MCF 10A (cell line): ENCODE measurements at regions of chr11 and their contacts with region 1.

Region 1: GRCh38 chr11:43396617-43397016 is 37.9 kb downstream of the TTC17 start:
- DNase-seq: no peak
- H3K4me3 Mint-ChIP-seq: no peak overlapping the region
- H3K27ac Mint-ChIP-seq: no peak overlapping the region
- H3K4me1 Mint-ChIP-seq: no peaks in the 10 kb centered on the region
- H3K27me3 Mint-ChIP-seq: no peaks in the 10 kb centered on the region
- CTCF ChIP-seq: no peak

Region 2: GRCh38 chr11:43467958-43468357 is 71.3 kb after region 1 on chr11:
- CTCF ChIA-PET with region 1: no interaction called
- POLR2A ChIA-PET with region 1: no interaction called
- intact Hi-C with region 1: loop called (anchors 2 kb)
- DNase-seq: no peak
- H3K4me3 Mint-ChIP-seq: no peak overlapping the region
- H3K27ac Mint-ChIP-seq: no peak overlapping the region
- H3K4me1 Mint-ChIP-seq: no peaks in the 10 kb centered on the region
- H3K27me3 Mint-ChIP-seq: no peaks in the 10 kb centered on the region
- CTCF ChIP-seq: no peak